ENCODE measurements at regions of chr13 and their contacts with region 1.

Region 1: GRCh38 chr13:77350811-77351210 is 23.9 kb upstream of the MYCBP2 start:
- DNase-seq: no peak
- H3K4me3 ChIP-seq: no peak overlapping the region
- H3K27ac ChIP-seq: no peak overlapping the region
- H3K4me1 ChIP-seq: no peaks in the 10 kb centered on the region
- H3K27me3 ChIP-seq: no peaks in the 10 kb centered on the region
- CTCF ChIP-seq: no peak

Region 2: GRCh38 chr13:77544355-77544754 is 193.5 kb after region 1 on chr13:
- CTCF ChIA-PET with region 1: interaction called, 10 read pairs
- POLR2A ChIA-PET with region 1: no interaction called
- intact Hi-C with region 1: no loop called
- DNase-seq: no peak
- H3K4me3 ChIP-seq: no peak overlapping the region
- H3K27ac ChIP-seq: peak overlapping the region; percentile 3; the same call in 1 of the 2 replicates
- H3K4me1 ChIP-seq: peaks cover 11% of the 10 kb centered on the region
- H3K27me3 ChIP-seq: no peaks in the 10 kb centered on the region
- CTCF ChIP-seq: no peak